ENCODE measurements at regions of chr4 and their contacts with region 1.

Region 1: GRCh38 chr4:498328-498904 is 540 bp downstream of the ZNF721 start:
- DNase-seq: no peak
- H3K4me3 ChIP-seq: peak overlapping the region in 1 of 2 donors; percentile 88
- H3K4me3 Mint-ChIP-seq: peak overlapping the region; percentile 92 to 95 (median 93)
- H3K27ac ChIP-seq: peak overlapping the region; percentile 89
- H3K27ac Mint-ChIP-seq: peak overlapping the region; percentile 93 to 97 (median 96)
- H3K4me1 ChIP-seq: peaks cover 22% of the 10 kb centered on the region
- H3K4me1 Mint-ChIP-seq: peaks cover 25 to 65% (median 47%) of the 10 kb centered on the region in 4 donors
- H3K27me3 ChIP-seq: no peaks in the 10 kb centered on the region
- H3K27me3 Mint-ChIP-seq: no peaks in the 10 kb centered on the region

Region 2: GRCh38 chr4:337143-337931 is 161.1 kb before region 1 on chr4 and contains the start of gene ZNF141:
- CTCF ChIA-PET with region 1: no interaction called
- POLR2A ChIA-PET with region 1: interaction called, 5 read pairs
- intact Hi-C with region 1: loop called (anchors 1 kb)
- DNase-seq: peak; percentile 90 to 97 (median 94)
- H3K4me3 ChIP-seq: peak within 1 kb of the TSS; percentile 68 to 99
- H3K4me3 Mint-ChIP-seq: peak within 1 kb of the TSS; percentile 96 to 100 (median 99)
- H3K27ac ChIP-seq: peak within 1 kb of the TSS; percentile 78
- H3K27ac Mint-ChIP-seq: peak within 1 kb of the TSS; percentile 98 to 99 (median 99)
- H3K4me1 ChIP-seq: peaks cover 15% of the 10 kb centered on the region
- H3K4me1 Mint-ChIP-seq: peaks cover 19 to 54% (median 35%) of the 10 kb centered on the region in 4 donors
- H3K27me3 ChIP-seq: no peaks in the 10 kb centered on the region
- H3K27me3 Mint-ChIP-seq: peaks cover 0 to 3% of the 10 kb centered on the region in 2 donors
- total RNA-seq, gene ZNF141: 55.2 to 59.6 TPM

Region 3: GRCh38 chr4:445410-445809 is 53.0 kb before region 1 on chr4:
- CTCF ChIA-PET with region 1: no interaction called
- POLR2A ChIA-PET with region 1: no interaction called
- intact Hi-C with region 1: no loop called
- DNase-seq: no peak
- H3K4me3 ChIP-seq: no peak overlapping the region
- H3K4me3 Mint-ChIP-seq: no peak overlapping the region
- H3K27ac ChIP-seq: no peak overlapping the region
- H3K27ac Mint-ChIP-seq: no peak overlapping the region
- H3K4me1 ChIP-seq: no peaks in the 10 kb centered on the region
- H3K4me1 Mint-ChIP-seq: no peaks in the 10 kb centered on the region
- H3K27me3 ChIP-seq: no peaks in the 10 kb centered on the region
- H3K27me3 Mint-ChIP-seq: no peaks in the 10 kb centered on the region